Endothelial cell of umbilical vein (primary cell): ENCODE measurements at regions of chr15 and their contacts with region 1.

Region 1: DNA sequence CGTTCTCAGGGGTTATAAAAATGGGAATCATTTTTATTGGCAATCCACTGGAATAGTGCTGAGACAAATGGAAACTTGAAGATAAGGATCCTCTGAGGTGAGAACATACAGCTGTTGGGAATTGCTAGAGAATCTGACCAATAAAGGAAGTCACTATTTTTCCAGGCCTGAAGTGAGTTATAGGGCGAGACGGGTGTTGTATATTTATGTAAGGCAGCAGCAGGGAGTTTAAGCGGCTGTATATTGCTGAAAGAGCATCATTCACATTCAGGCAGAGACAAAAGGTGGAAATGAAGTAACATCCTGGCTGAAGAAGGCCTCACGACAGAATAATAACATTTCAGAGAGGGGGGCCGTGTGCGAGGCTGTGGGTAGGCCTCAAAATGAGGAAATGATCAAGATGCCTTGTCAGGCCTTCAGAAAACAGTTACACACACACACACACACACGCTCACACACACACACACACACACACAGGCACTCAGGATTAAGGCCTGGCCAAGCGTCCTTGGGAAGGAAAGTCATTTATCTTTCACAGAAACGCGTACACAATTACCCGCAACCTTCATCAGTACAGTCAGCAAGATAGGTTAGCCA is 964.9 kb upstream of the NR2F2 start:
- DNase-seq: peak; percentile 100
- H3K4me3 ChIP-seq: no peak overlapping the region
- H3K27ac ChIP-seq: peak overlapping the region; percentile 98
- H3K4me1 ChIP-seq: peaks cover 37% of the 10 kb centered on the region
- H3K27me3 ChIP-seq: no peaks in the 10 kb centered on the region
- CTCF ChIP-seq: no peak
- POLR2A ChIP-seq: peak; percentile 87

Region 2: GRCh38 chr15:94582369-94582768 is 783.2 kb before region 1 on chr15:
- CTCF ChIA-PET with region 1: no interaction called
- POLR2A ChIA-PET with region 1: no interaction called
- dilution Hi-C with region 1: no loop called
- intact Hi-C with region 1: loop called (anchors 2 kb)
- DNase-seq: peak; percentile 85
- H3K4me3 ChIP-seq: no peak overlapping the region
- H3K27ac ChIP-seq: no peak overlapping the region
- H3K4me1 ChIP-seq: peaks cover 25% of the 10 kb centered on the region
- H3K27me3 ChIP-seq: no peaks in the 10 kb centered on the region
- CTCF ChIP-seq: peak; percentile 75 to 80
- POLR2A ChIP-seq: no peak

Region 3: DNA sequence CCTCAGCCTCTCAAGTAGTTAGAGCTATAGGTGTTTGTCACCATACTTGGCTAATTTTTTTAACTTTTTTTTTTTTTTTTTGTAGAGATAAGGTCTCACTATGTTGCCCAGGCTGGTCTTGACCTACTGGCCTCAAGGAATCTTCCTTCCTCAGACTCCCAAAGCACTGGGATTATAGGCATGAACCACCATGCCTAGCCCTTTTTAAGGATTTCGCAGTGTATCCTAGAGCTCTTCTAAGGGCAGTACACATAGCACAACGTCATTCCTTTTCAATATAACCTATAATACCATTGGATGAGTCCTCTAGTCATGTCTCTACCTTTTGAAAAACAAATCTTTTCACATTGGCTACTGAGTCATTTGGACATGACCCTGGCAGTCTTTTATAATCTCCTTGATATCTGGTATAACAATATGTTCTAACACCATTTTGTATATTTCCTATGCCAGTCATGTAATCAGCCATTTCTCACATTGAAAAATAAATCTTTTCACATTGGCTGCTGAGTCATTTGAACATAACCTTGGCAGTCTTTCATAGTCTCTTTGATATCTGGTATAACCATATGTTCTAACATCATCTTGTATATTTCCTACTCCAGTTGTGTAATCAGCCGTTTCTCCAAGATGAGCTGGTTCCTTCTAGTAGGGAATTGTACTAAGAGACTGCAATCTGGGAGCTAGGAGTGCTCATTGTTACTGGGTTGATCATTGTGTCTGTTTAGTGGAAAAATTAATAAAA is 189.5 kb before region 1 on chr15:
- CTCF ChIA-PET with region 1: no interaction called
- POLR2A ChIA-PET with region 1: no interaction called
- dilution Hi-C with region 1: no loop called
- intact Hi-C with region 1: loop called (anchors 1 kb)
- DNase-seq: peak; percentile 94
- H3K4me3 ChIP-seq: no peak overlapping the region
- H3K27ac ChIP-seq: peak overlapping the region; percentile 95
- H3K4me1 ChIP-seq: peaks cover 30% of the 10 kb centered on the region
- H3K27me3 ChIP-seq: no peaks in the 10 kb centered on the region
- CTCF ChIP-seq: no peak
- POLR2A ChIP-seq: no peak

Region 4: DNA sequence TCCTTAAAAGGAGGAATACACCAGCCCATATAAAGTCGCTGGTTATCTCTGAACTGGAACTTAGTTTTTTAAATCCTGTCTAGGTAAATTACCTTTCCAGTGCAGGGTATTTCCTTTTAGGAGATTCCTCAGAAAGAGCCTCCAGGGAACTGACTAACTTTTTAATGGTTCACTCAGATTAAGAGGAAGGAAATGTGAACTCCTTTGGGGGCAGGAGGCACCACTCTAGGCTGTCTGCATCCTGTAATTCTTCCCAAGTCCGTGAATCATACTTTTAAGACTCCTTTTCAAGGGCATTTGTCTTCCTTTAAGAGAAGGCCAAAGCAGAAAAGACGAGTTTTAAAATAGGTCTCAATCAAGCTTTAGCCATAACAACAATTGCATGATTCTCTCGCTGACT is 93.7 kb after region 1 on chr15:
- CTCF ChIA-PET with region 1: no interaction called
- POLR2A ChIA-PET with region 1: no interaction called
- dilution Hi-C with region 1: no loop called
- intact Hi-C with region 1: loop called (anchors 1 kb)
- DNase-seq: peak; percentile 90
- H3K4me3 ChIP-seq: peak overlapping the region in 1 of 3 experiments; percentile 51
- H3K27ac ChIP-seq: peak overlapping the region; percentile 85
- H3K4me1 ChIP-seq: peaks cover 41% of the 10 kb centered on the region
- H3K27me3 ChIP-seq: no peaks in the 10 kb centered on the region
- CTCF ChIP-seq: no peak
- POLR2A ChIP-seq: peak; percentile 65

Region 5: DNA sequence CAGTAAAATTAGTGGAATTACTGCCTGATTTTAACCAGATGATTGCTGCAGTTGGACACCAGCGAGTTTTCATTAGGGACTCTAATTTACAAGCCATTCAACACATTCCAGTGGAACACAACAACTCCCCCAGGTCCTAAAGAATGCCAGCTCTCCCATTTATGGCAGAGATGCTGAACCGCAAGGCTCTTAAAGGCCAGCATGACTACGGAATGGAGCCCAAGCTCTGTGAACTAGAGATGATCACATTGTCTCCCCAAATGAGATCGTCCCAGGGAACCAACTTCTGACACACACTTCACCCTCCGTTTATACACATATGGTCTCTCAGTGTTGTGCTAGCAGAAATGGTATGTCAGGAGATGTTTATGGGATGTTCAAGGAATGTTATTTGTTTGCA is 518.7 kb after region 1 on chr15:
- CTCF ChIA-PET with region 1: no interaction called
- POLR2A ChIA-PET with region 1: no interaction called
- dilution Hi-C with region 1: no loop called
- intact Hi-C with region 1: loop called (anchors 2 kb)
- DNase-seq: no peak
- H3K4me3 ChIP-seq: no peak overlapping the region
- H3K27ac ChIP-seq: no peak overlapping the region
- H3K4me1 ChIP-seq: peaks cover 22% of the 10 kb centered on the region
- H3K27me3 ChIP-seq: no peaks in the 10 kb centered on the region
- CTCF ChIP-seq: no peak
- POLR2A ChIP-seq: no peak

Region 6: GRCh38 chr15:96345560-96346399 is 980.2 kb after region 1 on chr15:
- CTCF ChIA-PET with region 1: no interaction called
- POLR2A ChIA-PET with region 1: no interaction called
- dilution Hi-C with region 1: no loop called
- intact Hi-C with region 1: loop called (anchors 1 kb)
- DNase-seq: peak; percentile 86
- H3K4me3 ChIP-seq: peak overlapping the region; percentile 16 to 99 (median 74)
- H3K27ac ChIP-seq: peak overlapping the region; percentile 87
- H3K4me1 ChIP-seq: peaks cover 83% of the 10 kb centered on the region
- H3K27me3 ChIP-seq: no peaks in the 10 kb centered on the region
- CTCF ChIP-seq: peak; percentile 22 to 33
- POLR2A ChIP-seq: no peak